Cardiac septum (tissue), 1 donor: ENCODE measurements at regions of chr16 and their contacts with region 1.

Region 1: DNA sequence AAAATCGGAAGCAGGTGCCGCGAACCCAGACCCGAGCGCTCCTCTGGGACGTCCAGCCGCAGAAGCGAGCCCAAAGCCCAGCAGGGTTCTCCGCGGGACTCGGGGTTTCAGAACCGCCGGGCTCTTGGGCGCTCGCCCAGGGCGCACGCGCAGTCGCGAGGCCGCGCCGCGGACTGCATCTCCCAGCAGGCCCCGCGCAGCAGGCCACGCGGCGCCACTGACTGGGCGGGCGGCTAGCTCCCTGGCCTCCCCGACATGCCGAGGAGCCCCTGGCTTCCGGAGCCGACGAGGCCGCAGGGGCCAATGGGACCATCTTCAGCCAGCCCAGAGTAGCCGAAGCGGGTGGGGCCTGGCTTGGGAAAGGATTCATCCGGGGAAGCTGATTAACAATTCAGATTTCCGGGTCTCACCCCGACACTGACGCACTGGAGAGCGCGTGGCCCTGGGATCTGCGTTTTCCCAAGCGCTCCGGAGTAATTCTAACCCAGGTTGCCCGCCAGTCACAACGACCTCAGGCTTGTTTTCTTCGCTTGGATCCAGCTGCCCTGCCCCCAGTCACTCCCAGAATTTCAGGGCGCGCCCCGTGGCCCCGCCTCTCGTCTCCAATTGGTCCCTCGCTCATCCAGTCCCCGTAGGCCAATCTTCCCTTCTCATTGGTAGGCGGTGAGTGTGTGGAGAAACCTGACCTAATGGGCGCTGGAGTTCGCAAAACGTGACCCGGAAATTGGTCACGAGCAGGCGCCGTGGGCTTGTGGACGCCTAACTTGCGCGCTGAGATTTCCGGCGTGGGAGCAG is at the start of gene ZNF263:
- DNase-seq: peak; percentile 98
- total RNA-seq, gene ZNF263: 11.3 TPM

Region 2: DNA sequence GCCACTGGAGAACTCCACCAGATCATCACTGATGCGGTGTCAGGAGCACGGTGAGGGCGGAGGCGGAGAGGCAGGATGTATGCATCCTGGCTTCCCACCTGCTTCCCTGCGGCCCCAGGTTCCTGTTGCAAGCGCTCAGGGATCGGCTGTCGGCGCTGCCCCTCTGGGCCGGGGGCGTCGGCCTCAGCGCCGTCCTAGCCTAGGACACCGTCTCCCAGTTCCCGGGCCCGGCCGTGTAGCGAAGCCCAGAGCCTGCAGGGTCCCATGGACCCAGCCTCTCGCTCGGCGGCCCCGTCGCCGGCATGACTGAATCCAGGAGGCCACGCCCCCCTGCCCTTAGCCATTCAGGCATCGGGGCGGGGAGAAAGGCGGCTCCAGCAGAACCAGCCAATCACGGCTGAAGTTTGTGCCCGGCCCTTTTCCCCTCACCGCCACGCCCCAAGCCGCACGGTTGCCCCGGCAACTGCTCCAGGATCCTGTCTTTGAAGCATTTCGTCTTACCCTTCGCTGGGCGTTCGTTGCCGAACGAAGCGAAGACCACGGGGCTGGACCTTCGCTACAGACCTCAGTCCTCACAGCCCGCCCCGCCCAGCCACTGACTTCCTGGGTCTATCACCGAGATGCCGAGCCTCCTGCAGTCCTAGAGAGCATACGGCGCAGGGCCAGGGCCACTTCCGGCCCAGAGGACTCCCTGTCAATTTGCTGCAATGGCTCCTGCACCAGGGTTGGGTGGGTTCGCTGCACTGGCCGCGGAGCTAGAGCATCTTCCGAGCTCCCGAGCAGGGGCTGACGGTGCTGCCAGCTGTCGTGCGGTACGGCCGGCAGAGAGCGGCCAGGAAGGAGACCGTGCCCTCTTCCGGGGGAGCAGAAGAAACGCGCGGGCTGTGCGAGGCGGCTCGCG is 158.7 kb before region 1 on chr16:
- intact Hi-C with region 1: no loop called
- DNase-seq: peak; percentile 98

Region 3: DNA sequence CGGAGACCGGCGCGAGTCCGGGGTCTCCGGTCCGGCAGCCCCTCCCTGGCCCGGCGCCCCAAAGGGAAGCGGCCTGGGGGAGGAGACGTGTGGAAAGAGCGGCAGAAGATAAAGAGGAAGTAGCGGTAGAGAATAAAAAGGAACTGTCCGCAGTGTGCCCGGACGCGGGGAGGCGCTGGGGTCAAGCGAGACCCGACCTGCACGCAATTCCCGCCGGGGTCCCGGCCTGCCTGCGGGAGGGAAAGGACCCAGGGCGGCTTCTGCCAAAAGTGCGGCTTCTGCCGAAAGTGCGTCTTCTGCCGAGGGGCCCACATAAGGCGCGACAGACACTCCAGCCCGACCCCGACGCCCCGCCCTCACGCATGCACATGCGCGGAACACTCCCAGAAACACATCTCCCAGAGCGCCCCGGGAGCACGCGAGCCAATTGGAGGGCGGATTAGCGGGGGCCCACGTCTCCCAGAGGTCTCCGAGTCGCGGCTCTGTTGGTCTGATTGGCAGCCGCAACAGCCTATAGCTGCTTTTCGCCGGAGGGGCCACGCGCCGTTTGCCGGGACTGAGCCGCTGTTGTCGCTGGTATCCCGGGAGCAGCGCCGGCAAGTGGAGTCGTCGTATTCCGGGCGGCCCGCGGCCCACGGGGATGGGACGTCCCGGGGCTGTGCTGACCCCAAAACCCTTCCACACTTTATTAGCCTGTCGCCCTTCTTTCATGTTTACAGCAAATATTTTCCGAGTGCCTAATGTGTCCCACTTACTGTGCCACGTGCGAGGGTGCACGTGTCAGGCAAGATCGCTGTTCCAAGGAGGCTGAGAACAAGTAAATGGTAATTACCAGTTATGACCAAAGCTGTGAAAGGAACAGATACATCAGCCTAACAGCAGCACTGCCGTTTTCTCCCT is 18.5 kb before region 1 on chr16:
- intact Hi-C with region 1: loop called (anchors 1 kb)
- DNase-seq: peak; percentile 98

Region 4: DNA sequence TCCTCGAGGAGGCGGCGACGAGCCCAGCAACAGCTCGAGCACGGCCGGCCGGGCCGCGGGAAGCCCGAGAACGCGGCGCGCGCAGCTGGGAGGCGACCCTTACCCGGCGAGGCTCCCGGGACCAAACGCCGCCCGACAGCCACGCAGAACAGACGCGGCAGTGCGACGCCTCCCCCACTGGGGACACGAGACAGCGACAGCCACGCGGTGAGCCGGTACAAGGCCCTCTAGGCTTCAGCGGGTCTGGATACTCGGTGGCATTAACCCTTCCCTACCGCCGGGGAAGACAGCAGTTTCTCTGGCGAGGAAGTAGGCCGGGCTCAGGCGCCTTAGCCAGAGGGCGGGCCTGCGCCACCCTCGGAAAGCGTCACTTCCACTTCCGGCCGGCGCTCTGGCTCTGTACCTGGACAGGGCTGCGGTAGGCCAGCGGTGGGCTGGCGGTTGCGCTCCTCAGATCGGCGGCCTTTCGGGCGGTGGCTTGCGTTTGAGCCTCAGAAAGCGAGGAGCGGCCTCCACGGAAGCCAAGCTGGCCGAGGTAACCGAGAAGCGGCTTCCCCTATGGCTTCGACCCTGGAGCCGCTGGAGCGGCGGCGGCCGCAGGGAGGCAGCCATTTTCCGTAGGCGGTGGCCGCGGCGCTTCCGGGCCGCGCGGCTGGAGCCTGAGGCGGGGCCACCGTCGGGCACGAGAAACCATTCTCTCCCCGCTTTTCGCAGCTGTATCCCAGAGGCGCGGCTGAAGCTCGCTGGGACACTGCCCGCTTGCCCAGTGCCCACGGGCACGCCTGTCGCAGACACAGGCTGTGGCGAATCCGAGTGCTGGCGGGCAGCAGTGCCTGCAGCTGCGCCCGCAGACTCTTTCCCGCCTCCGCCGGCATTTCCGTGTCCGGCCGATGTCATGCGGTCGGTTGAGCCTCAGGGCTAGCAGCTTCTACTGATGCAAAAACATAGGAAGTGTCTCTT is 22.5 kb after region 1 on chr16 and contains the starts of genes TIGD7 and ZNF75A:
- intact Hi-C with region 1: loop called (anchors 1 kb)
- DNase-seq: peak; percentile 97
- total RNA-seq, gene TIGD7: 8.2 TPM
- total RNA-seq, gene ZNF75A: 21.3 TPM

Region 5: GRCh38 chr16:3400779-3401688 is 118.1 kb after region 1 on chr16 and contains the starts of genes ZNF174 and ZSCAN32:
- intact Hi-C with region 1: loop called (anchors 2 kb)
- DNase-seq: peak; percentile 100
- total RNA-seq, gene ZNF174: 9.2 TPM
- total RNA-seq, gene ZSCAN32: 7.2 TPM

Region 6: DNA sequence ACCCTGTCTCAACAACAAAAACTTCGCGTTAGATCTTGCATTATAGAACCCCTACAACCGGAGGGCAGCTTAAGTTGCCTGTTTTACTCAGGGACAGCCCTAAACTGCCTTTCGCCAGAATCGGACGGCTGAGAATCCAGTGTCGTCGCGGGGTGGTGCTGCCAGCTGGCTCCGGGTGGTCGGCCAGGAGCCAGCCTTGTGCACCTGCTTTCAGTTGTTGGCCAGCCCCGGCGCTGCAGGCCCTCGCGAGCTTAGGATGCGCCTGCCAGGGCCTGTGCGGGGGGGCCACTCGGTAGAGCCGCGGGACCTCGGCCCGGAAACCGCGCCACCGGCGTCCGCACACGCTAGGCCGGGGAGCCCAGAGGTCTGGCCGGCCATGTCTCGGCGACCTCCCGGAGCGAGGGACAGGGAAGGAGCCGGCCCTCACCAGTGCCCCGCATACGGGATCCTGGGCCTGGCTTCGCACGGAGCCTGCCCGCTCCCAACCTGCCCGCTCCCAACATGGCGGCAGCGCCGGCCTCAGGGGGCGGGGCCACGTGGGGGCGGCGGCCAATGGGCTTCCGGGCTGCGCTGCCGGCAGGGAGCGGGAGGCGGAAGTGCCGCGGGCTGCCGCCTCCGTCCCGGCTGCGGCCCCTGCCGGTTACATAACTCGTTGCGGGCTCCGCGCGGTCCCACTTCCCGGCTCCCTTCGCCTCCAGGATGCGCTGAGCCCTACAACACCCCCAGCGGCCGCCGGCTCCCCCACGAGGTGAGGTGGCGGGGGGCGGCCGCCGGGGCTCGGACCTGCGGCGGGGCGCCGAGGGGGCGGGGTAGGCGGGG is 174.7 kb after region 1 on chr16:
- intact Hi-C with region 1: loop called (anchors 5 kb)
- DNase-seq: peak; percentile 95